SK-N-SH (cell line): ENCODE measurements at regions of chr4 and their contacts with region 1.

Region 1: DNA sequence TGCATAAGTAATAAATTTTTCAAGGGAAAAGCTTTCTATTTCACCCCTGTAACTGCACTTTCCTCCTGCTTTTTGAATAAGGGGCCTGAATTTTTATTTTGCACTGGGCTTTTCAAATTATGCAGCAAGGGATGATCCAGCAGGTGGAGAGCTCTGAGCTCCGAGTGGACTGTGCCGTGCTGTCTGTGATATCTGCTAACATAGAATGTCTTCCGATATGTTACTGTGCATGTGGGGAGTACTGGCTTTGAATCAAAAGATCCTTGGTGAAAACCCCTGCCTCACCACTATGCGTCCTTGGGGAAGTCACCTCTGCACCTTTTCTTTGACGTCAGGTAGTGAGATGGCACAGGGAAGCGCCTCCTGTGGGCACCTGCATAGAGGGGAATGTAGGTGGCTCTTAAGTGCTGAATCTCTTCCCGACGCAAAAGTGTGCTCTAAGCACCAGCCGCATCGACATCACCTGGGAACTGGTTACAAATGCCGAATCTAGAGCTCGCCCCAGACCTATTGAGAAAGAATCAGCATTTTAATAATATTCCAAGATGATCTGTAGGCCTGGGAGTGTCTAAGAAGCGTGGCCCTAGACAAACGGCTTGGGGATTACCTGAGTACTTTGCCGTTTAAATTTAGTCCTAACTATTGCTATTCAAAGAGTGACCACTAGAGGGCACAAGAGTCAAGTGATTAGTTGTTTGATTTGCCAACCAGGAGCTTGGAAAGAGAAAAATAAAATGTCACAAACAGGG is 19.2 kb upstream of the WFS1 start:
- DNase-seq: peak; percentile 76
- H3K4me3 ChIP-seq: peak overlapping the region in 1 of 2 experiments; percentile 12; a peak in 1 of 4 replicates
- H3K27ac ChIP-seq: no peak overlapping the region
- H3K4me1 ChIP-seq: peaks cover 0 to 28% of the 10 kb centered on the region in 2 experiments; a peak in 2 of 4 replicates
- H3K27me3 ChIP-seq: no peaks in the 10 kb centered on the region; the same call in 1 of the 2 replicates
- CTCF ChIP-seq: peak; percentile 83
- EP300 ChIP-seq: no peak
- RAD21 ChIP-seq: peak; percentile 89

Region 2: DNA sequence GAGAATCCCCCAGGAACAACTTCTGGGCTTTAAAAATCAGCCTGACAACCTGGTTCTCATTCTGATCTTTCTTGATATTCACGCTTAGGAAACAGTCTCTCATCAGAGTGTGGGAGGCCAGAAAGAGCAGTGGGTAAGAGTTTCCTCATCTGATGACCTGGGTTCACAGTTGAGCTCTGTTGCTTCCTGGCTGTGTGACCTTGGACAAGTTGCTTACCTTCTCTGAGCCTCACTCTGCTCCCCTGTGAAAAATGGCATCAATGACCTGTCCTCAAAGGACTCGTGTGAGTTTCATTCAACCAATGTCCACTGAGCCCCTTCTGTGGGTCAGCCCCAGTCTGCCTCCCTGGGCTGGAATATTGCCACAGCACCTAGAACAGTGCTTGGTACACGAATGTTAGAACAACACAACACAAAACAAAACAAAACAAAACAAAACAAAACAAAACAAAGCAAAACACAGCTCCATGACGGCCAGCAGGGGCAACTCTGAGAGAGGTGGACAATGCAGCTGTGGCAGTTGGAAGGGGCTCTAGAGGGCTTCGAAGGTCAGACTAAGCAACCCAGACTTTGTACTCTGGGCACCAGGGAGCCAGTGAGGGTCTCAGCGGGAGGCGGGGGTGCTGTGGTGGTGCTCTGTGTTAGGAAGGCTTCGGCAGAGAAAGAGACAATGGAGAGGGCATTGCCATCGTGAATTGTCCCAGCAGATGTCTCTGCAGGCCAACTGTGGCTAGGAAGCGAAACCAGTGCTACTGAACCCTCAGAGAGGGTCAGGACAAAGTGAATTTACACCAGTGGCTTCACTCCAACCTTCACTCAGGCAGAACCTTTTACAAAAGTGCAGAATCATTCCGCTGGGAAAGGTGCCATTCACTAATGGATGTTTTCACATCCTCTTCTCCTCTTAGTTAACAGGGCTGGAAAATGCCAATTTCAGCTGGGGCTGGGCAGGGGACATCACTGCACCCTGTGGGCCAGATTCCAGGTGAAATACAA is 217.9 kb before region 1 on chr4:
- CTCF ChIA-PET with region 1: interaction called, 16 read pairs
- POLR2A ChIA-PET with region 1: no interaction called
- DNase-seq: no peak
- H3K4me3 ChIP-seq: no peak overlapping the region
- H3K27ac ChIP-seq: peak overlapping the region in 1 of 2 experiments; percentile 47; a peak in 1 of 4 replicates
- H3K4me1 ChIP-seq: peaks cover 0 to 15% of the 10 kb centered on the region in 2 experiments; a peak in 1 of 4 replicates
- H3K27me3 ChIP-seq: no peaks in the 10 kb centered on the region
- CTCF ChIP-seq: no peak
- EP300 ChIP-seq: no peak
- RAD21 ChIP-seq: peak; percentile 54

Region 3: GRCh38 chr4:6229095-6229494 is 21.3 kb before region 1 on chr4:
- CTCF ChIA-PET with region 1: interaction called, 14 read pairs
- POLR2A ChIA-PET with region 1: no interaction called
- DNase-seq: peak; percentile 87
- H3K4me3 ChIP-seq: no peak overlapping the region
- H3K27ac ChIP-seq: peak overlapping the region in 1 of 2 experiments; percentile 48; a peak in 1 of 4 replicates
- H3K4me1 ChIP-seq: peaks cover 0 to 33% of the 10 kb centered on the region in 2 experiments; a peak in 2 of 4 replicates
- H3K27me3 ChIP-seq: no peaks in the 10 kb centered on the region
- CTCF ChIP-seq: no peak
- EP300 ChIP-seq: peak in 1 of 2 experiments; percentile 34; a peak in 1 of 4 replicates
- RAD21 ChIP-seq: peak; percentile 65

Region 4: DNA sequence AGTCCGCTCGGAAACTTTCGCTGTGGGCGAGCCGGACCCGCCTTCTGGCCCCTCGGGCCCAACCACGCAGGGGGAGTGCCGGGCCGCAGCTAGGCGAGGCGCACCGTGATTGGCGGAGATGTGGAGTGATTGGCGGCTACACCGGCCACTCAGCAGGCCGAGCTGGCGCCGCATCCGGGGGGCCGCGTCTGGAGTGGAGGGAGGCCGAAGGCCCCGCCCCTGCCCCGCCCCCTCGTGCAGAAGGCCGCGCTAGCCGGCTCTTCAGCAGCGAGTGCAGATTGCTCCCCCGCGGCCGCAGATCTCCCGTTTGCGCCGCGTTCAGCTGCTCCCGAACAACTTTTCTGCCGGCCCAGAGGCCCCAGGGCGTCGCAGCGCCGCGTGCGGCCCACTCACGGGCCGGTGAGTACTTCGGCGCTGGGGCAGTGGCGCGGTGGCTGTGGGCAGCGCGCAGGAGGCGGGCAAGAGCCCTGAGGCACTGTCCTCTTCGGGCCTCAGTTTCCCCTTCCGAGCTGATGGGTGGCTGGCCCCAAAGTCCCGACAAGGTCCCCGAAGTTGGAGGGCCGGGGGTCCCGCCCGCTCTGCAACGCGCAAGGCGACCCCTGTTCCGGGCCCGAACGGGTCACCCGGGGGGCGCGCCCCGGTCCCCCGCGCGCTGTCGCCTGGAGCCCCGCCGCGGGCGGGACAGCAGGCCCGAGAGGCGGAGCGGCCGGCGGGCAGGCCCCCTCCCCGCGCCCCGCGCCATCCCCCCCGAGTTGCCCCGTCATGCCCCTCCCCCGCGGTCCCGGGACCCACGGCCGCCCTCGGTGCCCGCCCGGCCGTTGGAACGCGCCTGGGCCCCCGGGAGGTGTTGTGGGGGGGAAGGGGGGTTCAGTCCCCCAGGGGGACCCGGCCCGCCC is 19.5 kb after region 1 on chr4 and contains the start of gene WFS1:
- CTCF ChIA-PET with region 1: interaction called, 247 read pairs
- POLR2A ChIA-PET with region 1: no interaction called
- DNase-seq: peak; percentile 100
- H3K4me3 ChIP-seq: peak within 1 kb of the TSS; percentile 82 to 97
- H3K27ac ChIP-seq: peak within 1 kb of the TSS in 1 of 2 experiments; percentile 75; a peak in 2 of 4 replicates
- H3K4me1 ChIP-seq: peaks cover 7 to 45% of the 10 kb centered on the region in 2 experiments; a peak in 3 of 4 replicates
- H3K27me3 ChIP-seq: no peaks in the 10 kb centered on the region
- CTCF ChIP-seq: no peak
- EP300 ChIP-seq: no peak
- RAD21 ChIP-seq: no peak
- polyA plus RNA-seq, gene WFS1: 15.8 and 18.7 TPM in 2 replicates

Region 5: GRCh38 chr4:6294705-6295421 is 44.5 kb after region 1 on chr4:
- CTCF ChIA-PET with region 1: no interaction called
- POLR2A ChIA-PET with region 1: no interaction called
- DNase-seq: no peak
- H3K4me3 ChIP-seq: no peak overlapping the region
- H3K27ac ChIP-seq: no peak overlapping the region
- H3K4me1 ChIP-seq: no peaks in the 10 kb centered on the region
- H3K27me3 ChIP-seq: no peaks in the 10 kb centered on the region
- CTCF ChIP-seq: no peak
- EP300 ChIP-seq: no peak
- RAD21 ChIP-seq: no peak

Region 6: GRCh38 chr4:6308899-6309643 is 58.7 kb after region 1 on chr4:
- CTCF ChIA-PET with region 1: interaction called, 12 read pairs
- POLR2A ChIA-PET with region 1: interaction called, 3 read pairs
- DNase-seq: peak; percentile 84
- H3K4me3 ChIP-seq: peak overlapping the region; percentile 54 to 60
- H3K27ac ChIP-seq: peak overlapping the region in 1 of 2 experiments; percentile 69; a peak in 2 of 4 replicates
- H3K4me1 ChIP-seq: peaks cover 0 to 4% of the 10 kb centered on the region in 2 experiments; a peak in 1 of 4 replicates
- H3K27me3 ChIP-seq: no peaks in the 10 kb centered on the region; the same call in 1 of the 2 replicates
- CTCF ChIP-seq: no peak; the same call in 1 of the 2 replicates
- EP300 ChIP-seq: no peak
- RAD21 ChIP-seq: no peak